A549 (cell line): ENCODE measurements at regions of chr17 and their contacts with region 1.

Region 1: DNA sequence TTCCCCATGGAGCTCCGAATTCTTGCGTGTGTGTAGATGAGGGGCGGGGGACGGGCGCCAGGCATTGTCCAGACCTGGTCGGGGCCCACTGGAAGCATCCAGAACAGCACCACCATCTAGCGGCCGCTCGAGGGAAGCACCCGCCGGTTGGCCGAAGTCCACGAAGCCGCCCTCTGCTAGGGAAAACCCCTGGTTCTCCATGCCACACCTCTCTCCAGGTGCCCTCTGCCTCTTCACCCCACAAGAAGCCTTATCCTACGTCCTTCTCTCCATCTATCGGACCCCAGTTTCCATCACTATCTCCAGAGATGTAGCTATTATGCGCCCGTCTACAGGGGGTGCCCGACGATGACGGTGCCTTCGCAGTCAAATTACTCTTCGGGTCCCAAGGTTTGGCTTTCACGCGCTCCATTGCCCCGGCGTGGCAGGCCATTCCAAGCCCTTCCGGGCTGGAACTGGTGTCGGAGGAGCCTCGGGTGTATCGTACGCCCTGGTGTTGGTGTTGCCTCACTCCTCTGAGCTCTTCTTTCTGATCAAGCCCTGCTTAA is 617 bp upstream of the SENP3 start:
- DNase-seq: peak; percentile 91 to 98
- ATAC-seq: peak; percentile 81 to 86
- H3K4me3 ChIP-seq: peak overlapping the region; percentile 77
- H3K27ac ChIP-seq: peak overlapping the region; percentile 90 to 97
- H3K4me1 ChIP-seq: peaks cover 45% of the 10 kb centered on the region
- CTCF ChIP-seq: peak; percentile 83
- EP300 ChIP-seq: no peak
- POLR2A ChIP-seq: 0 out of 2 replicates have a peak, but pooled peaks have one; percentile 11
- RAD21 ChIP-seq: peak; percentile 89 to 93

Region 2: DNA sequence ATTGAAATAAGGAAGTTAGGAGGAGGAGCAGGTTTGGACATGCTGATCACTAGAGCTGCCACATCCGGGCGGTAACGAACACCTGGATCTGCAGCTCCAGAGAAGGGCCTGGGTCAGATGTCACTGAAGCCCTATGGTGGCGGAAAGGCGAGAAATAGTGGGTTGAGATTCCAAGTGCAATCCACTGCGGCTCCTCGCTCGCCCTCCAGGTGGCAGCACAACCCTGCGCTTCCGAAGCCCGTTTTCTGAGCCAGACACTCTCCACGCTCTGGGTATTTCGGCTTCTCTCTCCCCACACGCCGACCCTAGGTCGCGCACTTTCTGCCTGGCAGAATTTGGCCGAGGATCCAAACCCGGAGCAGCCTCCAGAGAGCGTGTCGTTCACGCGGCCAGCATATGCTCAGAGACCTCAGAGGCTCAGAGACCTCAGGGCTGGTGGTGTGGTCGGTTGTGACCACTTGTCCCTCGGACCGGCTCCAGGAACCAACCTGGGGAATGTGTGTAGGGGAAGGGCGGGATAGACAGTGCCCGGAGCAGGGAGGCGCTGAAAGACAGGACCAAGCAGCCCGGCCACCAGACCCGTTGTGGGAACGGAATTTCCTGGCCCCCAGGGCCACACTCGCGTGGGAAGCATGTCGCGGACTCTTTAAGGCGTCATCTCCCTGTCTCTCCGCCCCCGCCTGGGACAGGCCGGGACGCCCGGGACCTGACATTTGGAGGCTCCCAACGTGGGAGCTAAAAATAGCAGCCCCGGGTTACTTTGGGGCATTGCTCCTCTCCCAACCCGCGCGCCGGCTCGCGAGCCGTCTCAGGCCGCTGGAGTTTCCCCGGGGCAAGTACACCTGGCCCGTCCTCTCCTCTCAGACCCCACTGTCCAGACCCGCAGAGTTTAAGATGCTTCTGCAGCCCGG is 280.3 kb before region 1 on chr17:
- CTCF ChIA-PET with region 1: interaction called, 10 read pairs
- POLR2A ChIA-PET with region 1: no interaction called
- DNase-seq: peak; percentile 90 to 96
- ATAC-seq: peak; percentile 80 to 88
- H3K4me3 ChIP-seq: peak overlapping the region; percentile 46
- H3K27ac ChIP-seq: peak overlapping the region; percentile 47 to 74
- H3K4me1 ChIP-seq: peaks cover 11% of the 10 kb centered on the region
- CTCF ChIP-seq: peak; percentile 97
- EP300 ChIP-seq: no peak
- POLR2A ChIP-seq: no peak
- RAD21 ChIP-seq: peak; percentile 99 to 100

Region 3: GRCh38 chr17:7383742-7384488 is 177.2 kb before region 1 on chr17:
- CTCF ChIA-PET with region 1: interaction called, 11 read pairs
- POLR2A ChIA-PET with region 1: no interaction called
- DNase-seq: no peak
- ATAC-seq: no peak
- H3K4me3 ChIP-seq: no peak overlapping the region
- H3K27ac ChIP-seq: no peak overlapping the region
- H3K4me1 ChIP-seq: no peaks in the 10 kb centered on the region
- CTCF ChIP-seq: no peak
- EP300 ChIP-seq: no peak
- POLR2A ChIP-seq: no peak
- RAD21 ChIP-seq: no peak

Region 4: DNA sequence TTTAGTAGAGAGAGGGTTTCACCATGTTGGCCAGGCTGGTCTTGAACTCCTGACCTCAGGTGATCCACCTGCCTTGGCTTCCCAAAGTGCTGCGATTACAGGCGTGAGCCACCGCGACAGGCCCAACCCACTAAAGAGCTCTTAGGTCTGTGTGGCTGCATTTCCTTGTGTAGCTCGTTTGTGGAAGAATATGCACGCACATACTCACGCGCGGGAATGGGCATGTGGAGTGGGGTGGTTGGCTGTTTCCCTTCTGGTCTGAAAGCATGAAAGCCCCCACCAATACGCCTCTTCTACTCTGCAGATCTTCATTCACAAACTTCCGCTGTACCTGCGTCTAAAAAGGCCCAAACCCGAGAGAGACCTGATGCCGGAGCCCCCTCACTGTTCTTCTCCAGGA is 106.1 kb before region 1 on chr17:
- CTCF ChIA-PET with region 1: interaction called, 17 read pairs
- POLR2A ChIA-PET with region 1: no interaction called
- DNase-seq: no peak
- ATAC-seq: no peak
- H3K4me3 ChIP-seq: no peak overlapping the region
- H3K27ac ChIP-seq: peak overlapping the region in 1 of 2 experiments; percentile 17; a peak in 1 of 6 replicates
- H3K4me1 ChIP-seq: no peaks in the 10 kb centered on the region
- CTCF ChIP-seq: no peak
- EP300 ChIP-seq: no peak
- POLR2A ChIP-seq: no peak
- RAD21 ChIP-seq: no peak

Region 5: DNA sequence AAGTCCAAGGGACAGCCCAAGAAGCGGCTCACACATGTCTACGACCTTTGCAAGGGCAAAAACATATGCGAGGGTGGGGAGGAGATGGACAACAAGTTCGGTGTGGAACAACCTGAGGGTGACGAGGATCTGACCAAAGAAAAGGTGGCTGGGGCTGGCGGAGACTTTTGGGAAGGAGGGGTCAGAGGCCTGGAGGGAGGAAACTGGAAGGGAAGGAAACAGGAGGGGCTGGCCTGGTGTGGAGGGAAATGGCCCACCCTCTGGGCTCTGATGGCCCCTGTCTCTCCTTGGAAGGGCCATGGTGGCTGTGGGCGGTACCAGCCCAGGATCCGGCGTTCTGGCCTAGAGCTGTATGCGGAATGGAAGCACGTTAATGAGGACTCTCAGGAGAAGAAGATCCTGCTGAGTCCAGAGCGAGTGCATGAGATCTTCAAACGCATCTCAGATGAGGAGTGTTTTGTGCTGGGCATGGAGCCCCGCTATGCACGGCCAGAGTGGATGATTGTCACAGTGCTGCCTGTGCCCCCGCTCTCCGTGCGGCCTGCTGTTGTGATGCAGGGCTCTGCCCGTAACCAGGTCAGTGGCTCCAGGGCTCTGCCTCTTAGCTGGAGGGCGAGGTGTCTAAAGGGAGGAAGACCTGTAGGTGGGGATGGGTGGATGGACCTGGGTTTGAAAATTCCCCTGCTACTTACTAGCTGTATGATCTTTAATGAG is 64.5 kb before region 1 on chr17:
- CTCF ChIA-PET with region 1: interaction called, 43 read pairs
- POLR2A ChIA-PET with region 1: no interaction called
- DNase-seq: no peak
- ATAC-seq: peak in 1 of 2 experiments; percentile 14; a peak in 2 of 6 replicates
- H3K4me3 ChIP-seq: no peak overlapping the region
- H3K27ac ChIP-seq: no peak overlapping the region
- H3K4me1 ChIP-seq: peaks cover 1% of the 10 kb centered on the region; the same call in 1 of the 3 replicates
- CTCF ChIP-seq: no peak
- EP300 ChIP-seq: no peak
- POLR2A ChIP-seq: no peak
- RAD21 ChIP-seq: no peak

Region 6: GRCh38 chr17:7523033-7523432 is 38.1 kb before region 1 on chr17:
- CTCF ChIA-PET with region 1: interaction called, 232 read pairs
- POLR2A ChIA-PET with region 1: interaction called, 3 read pairs
- DNase-seq: peak in 1 of 2 experiments; percentile 63
- ATAC-seq: peak; percentile 34 to 69; a peak in 3 of 6 replicates
- H3K4me3 ChIP-seq: no peak overlapping the region
- H3K27ac ChIP-seq: no peak overlapping the region
- H3K4me1 ChIP-seq: no peaks in the 10 kb centered on the region
- CTCF ChIP-seq: peak; percentile 28
- EP300 ChIP-seq: no peak
- POLR2A ChIP-seq: no peak
- RAD21 ChIP-seq: no peak

Region 7: GRCh38 chr17:7572588-7573323 is 11.7 kb after region 1 on chr17:
- CTCF ChIA-PET with region 1: interaction called, 48 read pairs
- POLR2A ChIA-PET with region 1: interaction called, 10 read pairs
- DNase-seq: peak; percentile 100
- ATAC-seq: peak in 1 of 2 experiments; percentile 1; a peak in 5 of 6 replicates
- H3K4me3 ChIP-seq: peak overlapping the region; percentile 96
- H3K27ac ChIP-seq: peak overlapping the region; percentile 96 to 97
- H3K4me1 ChIP-seq: peaks cover 40% of the 10 kb centered on the region
- CTCF ChIP-seq: no peak
- EP300 ChIP-seq: no peak; a peak in 1 of 5 replicates
- POLR2A ChIP-seq: peak; percentile 98
- RAD21 ChIP-seq: no peak; a peak in 1 of 5 replicates